ENCODE measurements at regions of chr16 and their contacts with region 1.

Region 1: GRCh38 chr16:68520649-68521086 is 18.4 kb upstream of the ZFP90 start:
- DNase-seq: no peak
- H3K4me3 ChIP-seq: peak overlapping the region; percentile 50
- CTCF ChIP-seq: peak; percentile 98

Region 2: GRCh38 chr16:68406451-68407152 is 114.1 kb before region 1 on chr16:
- CTCF ChIA-PET with region 1: interaction called, 12 read pairs
- POLR2A ChIA-PET with region 1: no interaction called
- DNase-seq: peak; percentile 12
- H3K4me3 ChIP-seq: peak overlapping the region; percentile 36
- CTCF ChIP-seq: no peak

Region 3: DNA sequence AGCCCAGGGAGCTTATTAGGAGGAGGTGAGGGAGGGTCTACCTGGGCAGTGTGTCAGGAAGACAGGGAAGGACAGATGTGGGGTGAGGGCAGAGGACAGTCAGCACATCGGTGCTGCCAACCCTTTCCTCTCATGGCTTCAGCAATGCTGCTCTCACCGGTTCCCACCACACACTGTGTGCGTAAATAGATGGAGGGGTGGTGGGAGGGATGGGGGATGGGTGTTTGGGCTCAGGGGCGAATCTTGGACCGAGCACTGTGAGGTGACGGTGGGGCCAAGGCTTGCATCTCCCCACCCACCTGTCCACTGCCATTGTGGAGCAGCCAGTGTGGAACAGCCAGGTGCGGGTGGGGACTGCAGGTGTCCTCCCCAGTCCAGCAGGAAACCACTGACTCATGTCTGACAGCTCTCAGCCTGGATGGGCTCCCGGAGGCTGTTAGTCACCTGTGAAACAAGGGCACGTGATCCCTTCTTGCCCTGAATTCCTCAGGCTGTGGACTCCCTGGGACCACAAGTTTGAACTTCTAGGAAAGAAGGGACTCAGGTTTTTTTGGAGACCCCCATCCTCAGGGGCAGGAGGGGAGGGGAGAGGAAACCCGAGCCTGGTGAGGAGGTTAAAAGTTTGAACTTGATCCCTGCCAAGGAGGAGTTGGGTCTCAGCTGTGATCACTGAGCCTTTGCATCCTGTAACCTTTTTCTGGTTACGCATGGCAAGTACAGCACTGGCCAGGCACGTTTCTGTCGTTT is 29.7 kb before region 1 on chr16:
- CTCF ChIA-PET with region 1: interaction called, 11 read pairs
- POLR2A ChIA-PET with region 1: no interaction called
- DNase-seq: no peak
- H3K4me3 ChIP-seq: no peak overlapping the region
- CTCF ChIP-seq: no peak

Region 4: GRCh38 chr16:68538880-68539701 is 18.4 kb after region 1 on chr16 and contains the start of gene ZFP90:
- CTCF ChIA-PET with region 1: interaction called, 11 read pairs
- POLR2A ChIA-PET with region 1: no interaction called
- DNase-seq: peak; percentile 4
- H3K4me3 ChIP-seq: peak within 1 kb of the TSS; percentile 73
- CTCF ChIP-seq: no peak